ENCODE measurements at regions of chrX and their contacts with region 1.

Region 1: GRCh38 chrX:21708116-21708515 is 49.8 kb downstream of the SMPX start:
- DNase-seq: peak; percentile 10
- ATAC-seq: peak; percentile 63
- H3K4me3 Mint-ChIP-seq: no peak overlapping the region
- H3K27ac Mint-ChIP-seq: no peak overlapping the region
- H3K4me1 Mint-ChIP-seq: peaks cover 10% of the 10 kb centered on the region
- H3K27me3 Mint-ChIP-seq: no peaks in the 10 kb centered on the region
- CTCF ChIP-seq: no peak

Region 2: GRCh38 chrX:21725496-21725895 is 17.4 kb after region 1 on chrX:
- CTCF ChIA-PET with region 1: interaction called, 10 read pairs
- POLR2A ChIA-PET with region 1: no interaction called
- DNase-seq: no peak
- ATAC-seq: peak; percentile 69
- H3K4me3 Mint-ChIP-seq: no peak overlapping the region
- H3K27ac Mint-ChIP-seq: no peak overlapping the region
- H3K4me1 Mint-ChIP-seq: peaks cover 3% of the 10 kb centered on the region; the same call in 1 of the 2 replicates
- H3K27me3 Mint-ChIP-seq: no peaks in the 10 kb centered on the region
- CTCF ChIP-seq: no peak